ENCODE measurements at regions of chr10 and their contacts with region 1.

Region 1: DNA sequence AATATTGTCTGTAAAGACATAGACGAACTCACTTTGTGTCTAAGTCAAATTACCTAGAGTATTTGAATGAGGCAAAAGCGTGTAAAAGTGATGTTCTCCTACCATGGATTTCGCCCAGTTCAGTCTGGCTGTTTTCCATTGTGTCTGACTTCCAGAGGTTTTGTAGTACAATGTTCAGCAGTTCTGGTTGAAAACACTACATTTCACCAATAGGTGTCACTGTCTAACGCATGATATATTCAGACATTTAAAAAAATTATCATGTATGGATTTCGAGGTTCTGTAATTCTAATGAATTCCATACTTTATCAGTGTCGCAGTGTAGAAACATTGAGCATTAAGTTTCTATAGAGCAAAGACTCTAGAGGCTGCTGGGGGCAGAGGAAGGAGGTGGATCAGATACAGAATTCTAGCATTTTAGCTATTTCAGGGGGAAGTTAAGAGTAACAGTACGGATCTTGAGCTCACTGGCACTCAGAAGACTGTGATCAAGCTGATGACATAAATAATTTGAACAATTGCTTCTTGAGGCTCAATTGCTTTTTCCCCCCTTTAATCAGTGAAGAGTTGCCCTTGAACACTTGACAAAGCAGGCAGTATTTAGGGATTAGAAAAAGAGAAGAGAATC is 196.9 kb upstream of the RHOBTB1 start:
- DNase-seq: no peak

Region 2: GRCh38 chr10:61188691-61189090 is 47.8 kb after region 1 on chr10:
- intact Hi-C with region 1: loop called (anchors 5 kb)
- DNase-seq: no peak

Region 3: DNA sequence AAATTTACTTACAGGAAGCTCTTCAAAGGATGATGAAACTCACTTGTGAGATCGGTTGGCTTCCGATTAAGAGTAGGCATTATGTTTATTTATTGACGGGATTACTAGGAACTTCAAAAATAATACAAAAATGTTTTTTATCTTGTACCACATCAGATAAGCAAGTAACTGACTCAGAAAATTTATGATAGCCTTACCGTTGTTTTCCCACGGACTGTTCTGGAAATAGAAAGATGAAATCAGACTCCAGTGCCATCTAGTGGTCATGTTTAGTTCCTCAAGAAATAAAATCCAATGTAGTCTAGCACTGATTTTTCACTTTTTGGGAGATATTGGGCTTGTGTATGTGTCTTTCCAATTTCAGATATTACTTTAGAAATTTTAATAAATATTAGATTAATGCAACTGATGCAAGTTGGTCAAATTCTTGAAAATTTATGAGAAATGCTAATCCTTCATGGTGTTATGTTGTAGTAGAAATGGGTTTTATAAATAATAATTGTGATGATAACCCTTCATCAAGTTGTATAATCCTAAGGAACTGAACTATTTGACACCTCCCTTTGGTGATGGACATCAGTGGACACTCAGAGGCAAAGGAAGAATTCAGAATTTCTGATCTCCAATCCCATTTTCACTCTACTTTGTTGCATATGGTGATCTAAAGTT is 143.5 kb after region 1 on chr10:
- intact Hi-C with region 1: loop called (anchors 5 kb)
- DNase-seq: no peak